Activated CD4-positive, alpha-beta T cell treated with anti-CD3 and anti-CD28 coated beads for 36 hours (primary cell): ENCODE measurements at regions of chr17 and their contacts with region 1.

Region 1: GRCh38 chr17:49997791-49998703 is 3.0 kb upstream of the DLX3 start:
- DNase-seq: peak; percentile 92
- ATAC-seq: peak; percentile 86
- H3K4me3 Mint-ChIP-seq: no peak overlapping the region
- H3K27ac Mint-ChIP-seq: no peak overlapping the region
- H3K4me1 Mint-ChIP-seq: peaks cover 23% of the 10 kb centered on the region
- H3K27me3 Mint-ChIP-seq: peaks cover 56% of the 10 kb centered on the region

Region 2: GRCh38 chr17:49567871-49568694 is 430.0 kb before region 1 on chr17:
- CTCF ChIA-PET with region 1: interaction called, 27 read pairs
- POLR2A ChIA-PET with region 1: no interaction called
- intact Hi-C with region 1: loop called (anchors 1 kb)
- DNase-seq: peak; percentile 91
- ATAC-seq: peak; percentile 49
- H3K4me3 Mint-ChIP-seq: peak overlapping the region; percentile 56
- H3K27ac Mint-ChIP-seq: no peak overlapping the region
- H3K4me1 Mint-ChIP-seq: peaks cover 14% of the 10 kb centered on the region
- H3K27me3 Mint-ChIP-seq: peaks cover 19% of the 10 kb centered on the region

Region 3: GRCh38 chr17:49873466-49873865 is 124.6 kb before region 1 on chr17:
- CTCF ChIA-PET with region 1: interaction called, 79 read pairs
- POLR2A ChIA-PET with region 1: no interaction called
- intact Hi-C with region 1: no loop called
- DNase-seq: no peak
- ATAC-seq: no peak
- H3K4me3 Mint-ChIP-seq: no peak overlapping the region
- H3K27ac Mint-ChIP-seq: no peak overlapping the region
- H3K4me1 Mint-ChIP-seq: peaks cover 17% of the 10 kb centered on the region
- H3K27me3 Mint-ChIP-seq: peaks cover 1% of the 10 kb centered on the region

Region 4: GRCh38 chr17:49910094-49910857 is 87.8 kb before region 1 on chr17:
- CTCF ChIA-PET with region 1: interaction called, 15 read pairs
- POLR2A ChIA-PET with region 1: no interaction called
- intact Hi-C with region 1: no loop called
- DNase-seq: peak; percentile 59
- ATAC-seq: peak; percentile 79
- H3K4me3 Mint-ChIP-seq: peak overlapping the region; percentile 30
- H3K27ac Mint-ChIP-seq: no peak overlapping the region
- H3K4me1 Mint-ChIP-seq: peaks cover 6% of the 10 kb centered on the region
- H3K27me3 Mint-ChIP-seq: peaks cover 66% of the 10 kb centered on the region

Region 5: DNA sequence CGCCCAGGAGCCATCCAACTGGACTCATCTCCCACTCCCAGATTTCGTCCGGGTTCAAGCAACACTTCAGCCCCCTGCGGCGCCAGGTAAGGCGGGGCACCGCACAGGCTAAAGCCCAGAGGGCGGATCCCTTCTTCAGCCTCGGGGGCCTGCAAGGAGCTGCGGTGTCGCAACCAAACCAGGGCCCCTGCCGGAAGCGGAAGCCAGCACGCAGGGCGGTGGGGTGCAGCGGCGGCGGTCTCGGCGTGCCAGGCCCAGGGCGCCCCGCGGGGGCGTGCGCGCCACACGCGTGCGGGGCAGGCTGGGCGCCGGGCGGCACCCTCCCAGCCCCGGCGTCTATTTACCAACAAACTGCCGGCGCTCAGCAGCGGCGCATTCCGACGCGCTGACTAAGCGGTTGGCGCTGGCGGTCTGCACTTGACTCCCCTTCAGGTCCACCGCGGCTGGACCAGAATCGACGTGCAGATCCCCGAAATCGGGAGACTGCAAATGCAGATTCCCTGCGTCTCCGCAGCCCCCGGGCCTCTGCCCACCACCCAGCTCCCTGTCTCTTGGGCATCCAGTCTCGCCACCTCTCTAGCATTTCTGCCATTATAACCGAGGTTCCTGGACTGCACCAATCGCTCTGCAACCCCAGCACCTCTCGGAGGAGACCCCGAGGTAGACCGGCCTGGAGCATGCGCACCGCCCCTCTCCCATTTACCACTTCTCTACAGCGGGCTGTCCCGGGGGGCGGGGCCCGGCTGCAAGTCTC is 29.5 kb before region 1 on chr17:
- CTCF ChIA-PET with region 1: interaction called, 106 read pairs
- POLR2A ChIA-PET with region 1: interaction called, 3 read pairs
- intact Hi-C with region 1: loop called in 1 of 2 experiments (anchors 1 kb)
- DNase-seq: peak; percentile 85
- ATAC-seq: peak; percentile 83
- H3K4me3 Mint-ChIP-seq: peak overlapping the region; percentile 82
- H3K27ac Mint-ChIP-seq: peak overlapping the region; percentile 61
- H3K4me1 Mint-ChIP-seq: peaks cover 34% of the 10 kb centered on the region
- H3K27me3 Mint-ChIP-seq: peaks cover 70% of the 10 kb centered on the region